ENCODE measurements at regions of chr11 and their contacts with region 1.

Region 1: DNA sequence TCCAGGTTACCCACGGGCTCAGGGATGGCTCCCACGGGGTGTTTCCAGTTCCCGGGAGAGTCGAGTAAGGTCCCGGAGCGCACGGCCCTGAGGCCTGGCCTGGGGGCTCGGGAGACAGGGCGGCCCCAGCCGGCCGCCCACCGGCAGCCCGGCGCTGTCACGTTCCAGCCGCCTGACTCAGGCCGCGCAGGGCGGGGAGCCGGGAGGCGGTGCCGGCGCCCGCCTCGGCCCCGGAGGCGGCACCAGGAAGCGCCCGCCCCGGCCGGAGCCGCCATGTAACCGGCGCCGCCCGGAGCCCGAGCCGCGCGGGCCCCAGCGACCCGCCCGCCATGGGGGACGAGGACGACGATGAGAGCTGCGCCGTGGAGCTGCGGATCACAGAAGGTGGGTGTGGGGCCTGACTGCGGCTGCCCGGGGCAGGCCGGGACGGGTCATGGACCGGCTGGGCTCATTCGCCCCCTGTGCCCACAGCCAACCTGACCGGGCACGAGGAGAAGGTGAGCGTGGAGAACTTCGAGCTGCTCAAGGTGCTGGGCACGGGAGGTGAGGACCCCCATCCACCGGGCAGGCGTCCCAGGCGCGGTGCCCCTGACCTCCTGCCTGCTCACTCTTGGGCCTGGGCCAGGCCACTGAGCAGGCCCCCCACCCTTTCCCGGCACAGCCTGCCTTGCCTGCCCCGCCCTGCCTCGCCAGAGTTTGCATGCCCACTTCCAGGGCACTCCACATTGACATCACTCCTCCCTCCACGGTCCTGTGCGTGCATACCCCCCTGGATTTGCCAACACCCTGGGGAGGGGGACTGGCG is at the start of gene RPS6KA4:
- DNase-seq: peak in 8 of 10 donors; percentile 41 to 95 (median 66)

Region 2: GRCh38 chr11:64317957-64318693 is 41.0 kb before region 1 on chr11 and contains the start of gene PRDX5:
- intact Hi-C with region 1: loop called (anchors 5 kb)
- DNase-seq: peak; percentile 94 to 100 (median 96)